Gastrocnemius medialis (tissue), 4 donors: ENCODE measurements at regions of chr1 and their contacts with region 1.

Region 1: DNA sequence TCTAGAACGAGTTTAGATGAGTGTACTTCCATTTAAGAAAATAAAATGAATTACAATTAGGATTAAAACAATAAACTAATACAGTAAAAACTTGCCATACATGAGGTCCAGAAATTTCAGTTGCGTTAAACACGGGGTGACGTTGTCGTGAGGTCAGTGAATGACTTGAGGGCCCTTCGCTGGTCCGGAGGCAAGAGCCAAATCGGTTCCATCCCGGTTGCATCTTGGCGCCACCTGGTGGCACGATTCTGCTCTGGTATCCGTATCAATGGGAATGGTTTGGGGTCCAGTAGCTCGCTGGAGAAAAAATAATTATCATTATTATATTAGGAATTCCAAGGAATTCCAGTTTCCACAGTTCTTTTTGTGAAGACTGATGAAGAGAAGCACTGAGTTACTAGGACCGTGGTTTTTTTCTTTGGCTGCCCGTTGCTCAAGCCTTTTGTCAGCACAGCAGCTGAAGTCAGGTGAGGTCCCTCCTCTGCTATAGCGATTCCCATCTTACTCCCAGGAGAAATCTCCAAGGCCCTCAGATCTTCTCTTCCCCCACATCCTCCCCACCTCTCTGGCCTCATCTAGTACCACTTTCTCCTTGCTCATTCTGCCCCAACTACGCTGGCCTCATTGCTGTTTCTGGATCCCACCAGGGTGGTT is 161.4 kb downstream of the SLC35F3 start:
- DNase-seq: no peak
- ATAC-seq: no peak
- H3K4me3 ChIP-seq: no peak overlapping the region
- H3K27ac ChIP-seq: no peak overlapping the region
- H3K4me1 ChIP-seq: no peaks in the 10 kb centered on the region
- H3K27me3 ChIP-seq: no peaks in the 10 kb centered on the region
- CTCF ChIP-seq: peak in 3 of 5 experiments; percentile 17 to 54 (median 23)
- POLR2A ChIP-seq: no peak

Region 2: GRCh38 chr1:233394860-233395717 is 670.8 kb before region 1 on chr1:
- in situ Hi-C with region 1: no loop called
- intact Hi-C with region 1: loop called (anchors 10 kb)
- DNase-seq: no peak
- ATAC-seq: no peak
- H3K4me3 ChIP-seq: no peak overlapping the region
- H3K27ac ChIP-seq: no peak overlapping the region
- H3K4me1 ChIP-seq: no peaks in the 10 kb centered on the region
- H3K27me3 ChIP-seq: no peaks in the 10 kb centered on the region
- CTCF ChIP-seq: peak in 1 of 5 experiments; percentile 19
- POLR2A ChIP-seq: no peak